Panc1 (cell line): ENCODE measurements at regions of chr4 and their contacts with region 1.

Region 1: DNA sequence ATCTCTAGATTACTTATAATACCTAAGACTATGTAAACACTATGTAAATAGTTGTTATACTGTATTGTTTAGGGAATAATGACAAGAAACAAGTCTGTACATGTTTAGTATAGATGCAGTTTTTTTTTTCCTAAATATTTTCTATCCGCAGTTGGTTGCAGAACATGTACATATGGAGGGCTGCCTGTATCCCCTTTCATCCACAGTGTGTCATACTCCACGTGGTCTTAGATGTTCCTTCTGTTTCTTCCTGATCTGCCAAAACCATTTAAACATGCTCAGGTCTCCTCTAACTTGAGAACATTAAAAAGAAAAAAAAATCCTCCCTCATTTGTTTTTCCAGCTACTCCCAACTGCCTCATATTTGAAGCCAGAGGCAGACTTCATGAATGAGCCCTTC is 14.0 kb downstream of the OCIAD1 start:
- DNase-seq: no peak
- ATAC-seq: no peak
- H3K4me3 ChIP-seq: no peak overlapping the region
- H3K27ac ChIP-seq: no peak overlapping the region
- H3K4me1 ChIP-seq: no peaks in the 10 kb centered on the region
- H3K27me3 ChIP-seq: no peaks in the 10 kb centered on the region
- CTCF ChIP-seq: no peak

Region 2: DNA sequence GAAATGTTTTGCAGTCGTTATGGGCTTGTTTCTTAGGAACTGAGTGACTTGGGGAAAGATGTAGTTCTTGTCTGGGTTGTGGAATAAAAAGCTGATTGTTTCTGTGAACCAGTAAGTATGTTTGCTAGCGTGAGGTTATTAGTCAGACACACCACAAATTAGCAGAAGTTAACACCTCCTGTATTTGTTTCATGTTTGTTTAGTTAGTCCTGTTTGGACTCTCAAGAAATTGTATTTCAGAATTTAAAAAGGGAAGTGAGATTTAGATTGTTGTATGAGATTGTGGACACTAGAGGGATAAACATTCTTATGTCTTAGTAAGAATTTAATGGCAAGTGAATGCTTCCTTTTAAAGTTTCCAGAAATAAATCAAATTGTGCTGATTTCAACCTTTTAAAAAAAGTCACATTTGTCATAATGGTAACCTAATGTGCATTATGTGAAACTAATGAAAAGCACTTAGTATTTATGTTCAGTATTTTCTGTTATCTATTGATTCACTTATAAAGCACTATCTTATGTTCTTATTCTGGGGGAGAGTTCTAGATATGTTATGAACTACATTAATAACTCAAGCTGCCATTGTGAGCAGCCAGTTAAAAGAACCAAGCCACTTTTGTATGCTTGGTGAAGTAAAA is 1334.2 kb before region 1 on chr4:
- CTCF ChIA-PET with region 1: no interaction called
- POLR2A ChIA-PET with region 1: interaction called, 11 read pairs
- in situ Hi-C with region 1: no loop called
- intact Hi-C with region 1: no loop called
- DNase-seq: no peak
- ATAC-seq: no peak
- H3K4me3 ChIP-seq: no peak overlapping the region
- H3K27ac ChIP-seq: no peak overlapping the region
- H3K4me1 ChIP-seq: no peaks in the 10 kb centered on the region
- H3K27me3 ChIP-seq: no peaks in the 10 kb centered on the region
- CTCF ChIP-seq: no peak

Region 3: GRCh38 chr4:47972181-47972580 is 872.7 kb before region 1 on chr4:
- CTCF ChIA-PET with region 1: no interaction called
- POLR2A ChIA-PET with region 1: no interaction called
- in situ Hi-C with region 1: no loop called
- intact Hi-C with region 1: no loop called
- DNase-seq: no peak
- ATAC-seq: no peak
- H3K4me3 ChIP-seq: no peak overlapping the region
- H3K27ac ChIP-seq: no peak overlapping the region
- H3K4me1 ChIP-seq: no peaks in the 10 kb centered on the region
- H3K27me3 ChIP-seq: no peaks in the 10 kb centered on the region
- CTCF ChIP-seq: no peak

Region 4: GRCh38 chr4:48462363-48462762 is 382.5 kb before region 1 on chr4:
- CTCF ChIA-PET with region 1: no interaction called
- POLR2A ChIA-PET with region 1: no interaction called
- in situ Hi-C with region 1: no loop called
- intact Hi-C with region 1: no loop called
- DNase-seq: no peak
- ATAC-seq: no peak
- H3K4me3 ChIP-seq: no peak overlapping the region
- H3K27ac ChIP-seq: no peak overlapping the region
- H3K4me1 ChIP-seq: no peaks in the 10 kb centered on the region
- H3K27me3 ChIP-seq: no peaks in the 10 kb centered on the region
- CTCF ChIP-seq: no peak